ENCODE measurements at regions of chr14 and their contacts with region 1.

Region 1: GRCh38 chr14:87944987-87945604 is 47.9 kb downstream of the GALC start:
- DNase-seq: peak; percentile 57
- H3K4me3 Mint-ChIP-seq: no peak overlapping the region
- H3K27ac Mint-ChIP-seq: no peak overlapping the region
- H3K4me1 Mint-ChIP-seq: no peaks in the 10 kb centered on the region
- H3K27me3 Mint-ChIP-seq: peaks cover 15% of the 10 kb centered on the region
- CTCF ChIP-seq: no peak

Region 2: GRCh38 chr14:87934185-87934584 is 10.9 kb before region 1 on chr14:
- CTCF ChIA-PET with region 1: interaction called, 30 read pairs
- POLR2A ChIA-PET with region 1: no interaction called
- intact Hi-C with region 1: no loop called
- DNase-seq: peak; percentile 11
- H3K4me3 Mint-ChIP-seq: no peak overlapping the region
- H3K27ac Mint-ChIP-seq: no peak overlapping the region
- H3K4me1 Mint-ChIP-seq: no peaks in the 10 kb centered on the region
- H3K27me3 Mint-ChIP-seq: peaks cover 33% of the 10 kb centered on the region
- CTCF ChIP-seq: no peak

Region 3: GRCh38 chr14:88063845-88064244 is 118.7 kb after region 1 on chr14:
- CTCF ChIA-PET with region 1: no interaction called
- POLR2A ChIA-PET with region 1: no interaction called
- intact Hi-C with region 1: no loop called
- DNase-seq: no peak
- H3K4me3 Mint-ChIP-seq: no peak overlapping the region
- H3K27ac Mint-ChIP-seq: no peak overlapping the region
- H3K4me1 Mint-ChIP-seq: no peaks in the 10 kb centered on the region
- H3K27me3 Mint-ChIP-seq: no peaks in the 10 kb centered on the region
- CTCF ChIP-seq: no peak

Region 4: GRCh38 chr14:88168498-88169165 is 223.5 kb after region 1 on chr14:
- CTCF ChIA-PET with region 1: interaction called, 12 read pairs
- POLR2A ChIA-PET with region 1: no interaction called
- intact Hi-C with region 1: loop called (anchors 1 kb)
- DNase-seq: peak; percentile 60
- H3K4me3 Mint-ChIP-seq: no peak overlapping the region
- H3K27ac Mint-ChIP-seq: no peak overlapping the region
- H3K4me1 Mint-ChIP-seq: no peaks in the 10 kb centered on the region
- H3K27me3 Mint-ChIP-seq: peaks cover 39% of the 10 kb centered on the region
- CTCF ChIP-seq: peak; percentile 60

Region 5: DNA sequence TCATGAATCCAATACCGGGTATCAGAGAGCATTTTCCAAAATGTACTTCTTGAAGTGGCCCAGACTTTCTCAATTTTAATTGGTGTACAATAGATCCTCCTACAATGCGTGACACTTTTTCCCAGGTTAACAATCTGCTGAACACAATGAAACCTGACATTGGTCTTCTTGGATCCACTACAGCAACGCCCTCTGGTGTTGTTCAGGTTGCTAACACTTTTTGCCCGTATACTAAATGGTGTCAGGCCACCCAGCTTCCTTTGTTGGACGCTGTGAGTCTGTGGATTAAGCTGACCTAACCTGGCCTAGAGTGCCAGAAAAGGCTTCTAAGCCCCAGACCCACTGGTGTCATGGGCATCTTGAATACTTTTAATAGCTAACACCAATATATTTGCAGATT is 288.8 kb after region 1 on chr14:
- CTCF ChIA-PET with region 1: interaction called, 4 read pairs
- POLR2A ChIA-PET with region 1: no interaction called
- intact Hi-C with region 1: loop called (anchors 10 kb)
- DNase-seq: peak; percentile 52
- H3K4me3 Mint-ChIP-seq: no peak overlapping the region
- H3K27ac Mint-ChIP-seq: no peak overlapping the region
- H3K4me1 Mint-ChIP-seq: no peaks in the 10 kb centered on the region
- H3K27me3 Mint-ChIP-seq: peaks cover 19% of the 10 kb centered on the region
- CTCF ChIP-seq: peak; percentile 29

Region 6: DNA sequence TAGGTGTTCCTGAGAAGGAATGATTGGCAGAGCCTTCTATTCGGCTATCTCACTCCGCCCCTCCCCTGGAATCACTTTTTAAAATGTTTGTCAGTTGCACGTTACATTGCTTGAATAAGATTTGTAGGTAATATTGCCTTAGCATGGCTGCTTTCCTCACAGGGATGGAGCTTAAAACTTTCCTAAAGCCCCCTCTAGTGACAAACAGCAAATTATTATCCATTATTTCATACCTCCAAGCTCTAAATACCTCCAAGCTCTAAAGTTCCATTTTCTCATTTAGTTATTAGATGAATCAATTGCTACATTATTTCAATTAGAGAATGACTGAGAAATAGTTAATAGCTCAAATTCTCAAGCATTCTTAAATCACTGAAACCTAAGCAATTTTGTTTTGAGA is 435.3 kb after region 1 on chr14:
- CTCF ChIA-PET with region 1: interaction called, 5 read pairs
- POLR2A ChIA-PET with region 1: no interaction called
- intact Hi-C with region 1: loop called (anchors 5 kb)
- DNase-seq: peak; percentile 8
- H3K4me3 Mint-ChIP-seq: no peak overlapping the region
- H3K27ac Mint-ChIP-seq: no peak overlapping the region
- H3K4me1 Mint-ChIP-seq: no peaks in the 10 kb centered on the region
- H3K27me3 Mint-ChIP-seq: peaks cover 15% of the 10 kb centered on the region
- CTCF ChIP-seq: peak; percentile 21